CD4-positive, alpha-beta memory T cell (primary cell): ENCODE measurements at regions of chr7 and their contacts with region 1.

Region 1: GRCh38 chr7:139109188-139109982 is at the start of gene ZC3HAV1:
- DNase-seq: peak; percentile 89 to 94 (median 93)
- H3K4me3 ChIP-seq: peak within 1 kb of the TSS; percentile 90 to 96
- H3K4me3 Mint-ChIP-seq: peak within 1 kb of the TSS; percentile 95 to 99 (median 97)
- H3K27ac ChIP-seq: peak within 1 kb of the TSS; percentile 96
- H3K27ac Mint-ChIP-seq: peak within 1 kb of the TSS; percentile 88 to 100 (median 99)
- H3K4me1 ChIP-seq: peaks cover 29% of the 10 kb centered on the region
- H3K4me1 Mint-ChIP-seq: peaks cover 28 to 59% (median 38%) of the 10 kb centered on the region in 4 donors
- H3K27me3 ChIP-seq: no peaks in the 10 kb centered on the region
- H3K27me3 Mint-ChIP-seq: no peaks in the 10 kb centered on the region
- total RNA-seq, gene ZC3HAV1: 154 to 159 TPM

Region 2: DNA sequence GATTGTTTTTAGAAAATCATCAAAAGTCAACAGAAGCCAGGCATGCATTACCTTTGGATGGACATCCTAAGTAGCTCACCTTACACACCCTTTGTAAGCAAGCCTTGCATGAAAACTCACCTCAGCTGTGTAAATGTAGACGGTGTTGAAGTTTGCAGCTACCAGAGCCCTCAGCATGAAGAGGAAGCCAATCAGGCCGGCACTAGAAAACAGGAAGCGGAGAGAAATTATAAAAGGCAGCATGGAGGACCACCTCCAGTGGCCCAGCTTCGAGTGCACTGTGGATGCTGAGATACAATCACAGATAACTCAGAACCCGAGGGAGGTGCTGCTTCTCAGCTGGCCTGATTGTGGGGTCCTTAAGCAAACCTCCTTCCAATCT is 483.5 kb before region 1 on chr7:
- CTCF ChIA-PET with region 1: no interaction called
- POLR2A ChIA-PET with region 1: no interaction called
- intact Hi-C with region 1: no loop called
- DNase-seq: peak in 3 of 5 donors; percentile 7 to 17 (median 8)
- H3K4me3 ChIP-seq: no peak overlapping the region
- H3K4me3 Mint-ChIP-seq: peak overlapping the region in 5 of 8 donors; percentile 26 to 83 (median 75)
- H3K27ac ChIP-seq: no peak overlapping the region
- H3K27ac Mint-ChIP-seq: peak overlapping the region in 5 of 7 donors; percentile 18 to 86 (median 77)
- H3K4me1 ChIP-seq: peaks cover 23% of the 10 kb centered on the region
- H3K4me1 Mint-ChIP-seq: peaks cover 21 to 31% (median 27%) of the 10 kb centered on the region in 4 donors
- H3K27me3 ChIP-seq: no peaks in the 10 kb centered on the region
- H3K27me3 Mint-ChIP-seq: peaks cover 0 to 3% of the 10 kb centered on the region in 2 donors

Region 3: GRCh38 chr7:139230774-139231512 is 121.6 kb after region 1 on chr7 and contains the start of gene UBN2:
- CTCF ChIA-PET with region 1: no interaction called
- POLR2A ChIA-PET with region 1: interaction called, 3 read pairs
- intact Hi-C with region 1: loop called (anchors 1 kb)
- DNase-seq: peak; percentile 79 to 90 (median 80)
- H3K4me3 ChIP-seq: peak within 1 kb of the TSS; percentile 79 to 96
- H3K4me3 Mint-ChIP-seq: peak within 1 kb of the TSS; percentile 98 to 100 (median 100)
- H3K27ac ChIP-seq: peak within 1 kb of the TSS; percentile 74
- H3K27ac Mint-ChIP-seq: peak within 1 kb of the TSS; percentile 96 to 100 (median 98)
- H3K4me1 ChIP-seq: peaks cover 19% of the 10 kb centered on the region
- H3K4me1 Mint-ChIP-seq: peaks cover 10 to 36% (median 24%) of the 10 kb centered on the region in 4 donors
- H3K27me3 ChIP-seq: no peaks in the 10 kb centered on the region
- H3K27me3 Mint-ChIP-seq: no peaks in the 10 kb centered on the region
- total RNA-seq, gene UBN2: 23.6 to 26.7 TPM